ENCODE measurements at regions of chr10 and their contacts with region 1.

Region 1: GRCh38 chr10:5105626-5106025 is 11.4 kb downstream of the AKR1C3 start:
- DNase-seq: no peak
- ATAC-seq: no peak
- H3K4me3 ChIP-seq: no peak overlapping the region
- H3K27ac ChIP-seq: no peak overlapping the region
- H3K4me1 ChIP-seq: no peaks in the 10 kb centered on the region
- H3K27me3 ChIP-seq: no peaks in the 10 kb centered on the region
- CTCF ChIP-seq: no peak
- POLR2A ChIP-seq: no peak
- RAD21 ChIP-seq: no peak

Region 2: DNA sequence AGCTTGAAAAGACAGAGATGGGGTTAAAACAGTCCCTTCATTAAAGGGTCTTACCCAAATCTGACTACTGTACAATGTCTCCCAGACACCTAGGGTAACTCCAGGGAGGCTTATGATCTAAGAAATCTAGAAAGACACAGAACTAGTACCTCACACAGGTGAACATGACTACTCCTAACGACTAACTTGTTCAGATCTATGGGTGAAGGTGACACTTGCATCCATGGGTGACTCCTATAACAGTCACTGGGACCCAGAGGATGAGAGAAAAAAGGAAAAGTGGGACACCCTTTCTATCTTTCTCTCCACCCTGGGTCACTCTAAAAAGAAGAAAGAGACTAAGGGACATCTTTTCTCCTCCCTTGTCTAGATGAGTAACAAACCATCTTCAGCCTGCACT is 60.1 kb after region 1 on chr10:
- CTCF ChIA-PET with region 1: no interaction called
- POLR2A ChIA-PET with region 1: no interaction called
- dilution Hi-C with region 1: no loop called
- in situ Hi-C with region 1: no loop called
- intact Hi-C with region 1: loop called (anchors 10 kb)
- DNase-seq: peak; percentile 0
- ATAC-seq: no peak
- H3K4me3 ChIP-seq: no peak overlapping the region
- H3K27ac ChIP-seq: no peak overlapping the region
- H3K4me1 ChIP-seq: no peaks in the 10 kb centered on the region
- H3K27me3 ChIP-seq: no peaks in the 10 kb centered on the region
- CTCF ChIP-seq: no peak
- POLR2A ChIP-seq: no peak
- RAD21 ChIP-seq: no peak

Measured in IMR-90 (cell line).